ENCODE measurements at regions of chr18 and their contacts with region 1.

Region 1: GRCh38 chr18:32092422-32093101 is 888 bp downstream of the RNF138 start:
- DNase-seq: peak in 9 of 10 donors; percentile 98 to 100 (median 99)
- ATAC-seq: peak; percentile 79 to 83
- H3K4me3 Mint-ChIP-seq: peak overlapping the region; percentile 97 to 99 (median 99)
- H3K27ac Mint-ChIP-seq: peak overlapping the region; percentile 88 to 99 (median 98)
- H3K4me1 Mint-ChIP-seq: peaks cover 23 to 48% (median 46%) of the 10 kb centered on the region in 4 donors
- H3K27me3 Mint-ChIP-seq: no peaks in the 10 kb centered on the region

Region 2: DNA sequence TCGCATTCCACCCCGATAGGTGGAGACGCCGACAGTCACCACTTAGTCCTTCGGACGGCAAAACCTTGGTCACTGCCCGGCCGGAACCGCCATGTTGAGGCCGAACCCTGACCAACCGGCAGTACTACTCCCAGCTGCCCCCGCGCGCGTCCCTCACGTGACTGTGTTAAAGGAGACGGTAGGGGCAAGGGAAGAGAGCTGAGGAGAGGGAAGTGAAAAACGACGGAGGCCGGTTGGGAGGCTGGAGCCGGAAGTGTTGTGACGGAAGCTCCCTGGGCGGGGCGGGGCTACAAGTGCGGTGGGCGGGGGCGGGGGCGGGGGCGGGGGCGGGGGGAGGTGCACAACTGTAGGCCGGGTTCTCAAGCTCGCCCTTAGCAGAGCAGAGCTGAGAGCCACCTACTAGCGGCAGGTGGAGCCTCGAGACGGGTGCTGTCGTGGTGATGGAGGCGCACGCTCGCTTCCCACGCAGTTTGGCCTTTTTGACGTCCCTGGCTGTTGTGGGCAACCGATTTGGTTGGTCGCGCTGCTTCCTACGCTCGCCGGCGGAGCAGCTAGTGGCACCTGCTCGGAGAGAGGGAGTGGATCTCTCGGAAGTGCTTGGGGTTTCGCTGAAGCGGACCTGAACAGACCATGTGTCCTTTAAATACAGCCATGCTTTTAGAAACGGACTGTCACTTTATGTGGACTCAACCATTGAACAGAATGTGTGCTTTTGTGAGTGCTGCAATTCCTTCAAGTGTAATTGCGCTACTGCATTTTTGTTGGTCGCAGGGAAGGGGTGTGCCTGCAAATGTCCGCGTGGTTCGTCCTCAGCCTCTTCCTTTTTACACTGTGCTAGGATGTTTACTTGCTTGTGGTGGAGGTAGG is 149.3 kb before region 1 on chr18 and contains the start of gene TRAPPC8:
- POLR2A ChIA-PET with region 1: interaction called, 47 read pairs
- DNase-seq: peak; percentile 81 to 97 (median 92)
- ATAC-seq: peak; percentile 88
- H3K4me3 Mint-ChIP-seq: peak within 1 kb of the TSS; percentile 93 to 100 (median 98)
- H3K27ac Mint-ChIP-seq: peak within 1 kb of the TSS; percentile 96 to 100 (median 100)
- H3K4me1 Mint-ChIP-seq: peaks cover 28 to 54% (median 46%) of the 10 kb centered on the region in 4 donors
- H3K27me3 Mint-ChIP-seq: no peaks in the 10 kb centered on the region
- polyA plus RNA-seq, gene TRAPPC8: 13.2 to 18.6 (median 14.0) TPM

Region 3: GRCh38 chr18:32040936-32041335 is 51.6 kb before region 1 on chr18:
- POLR2A ChIA-PET with region 1: interaction called, 11 read pairs
- DNase-seq: peak in 6 of 10 donors; percentile 24 to 66 (median 47)
- ATAC-seq: peak; percentile 81 to 93
- H3K4me3 Mint-ChIP-seq: peak overlapping the region; percentile 37 to 75 (median 68)
- H3K27ac Mint-ChIP-seq: peak overlapping the region; percentile 49 to 92 (median 83)
- H3K4me1 Mint-ChIP-seq: peaks cover 20 to 68% (median 57%) of the 10 kb centered on the region in 4 donors
- H3K27me3 Mint-ChIP-seq: no peaks in the 10 kb centered on the region